Naive thymus-derived CD4-positive, alpha-beta T cell (primary cell): ENCODE measurements at regions of chr19 and their contacts with region 1.

Region 1: GRCh38 chr19:7522072-7522922 is at the start of gene MCOLN1:
- DNase-seq: peak; percentile 97 to 100 (median 99)
- ATAC-seq: peak; percentile 98
- H3K4me3 ChIP-seq: peak within 1 kb of the TSS; percentile 46
- H3K4me3 Mint-ChIP-seq: peak within 1 kb of the TSS; percentile 80 to 95 (median 88)
- H3K27ac ChIP-seq: peak within 1 kb of the TSS; percentile 30
- H3K27ac Mint-ChIP-seq: peak within 1 kb of the TSS; percentile 10 to 95 (median 90)
- H3K4me1 ChIP-seq: peaks cover 10 to 14% of the 10 kb centered on the region in 2 donors
- H3K4me1 Mint-ChIP-seq: peaks cover 14 to 23% (median 17%) of the 10 kb centered on the region in 7 donors
- H3K27me3 ChIP-seq: no peaks in the 10 kb centered on the region
- H3K27me3 Mint-ChIP-seq: peaks cover 0 to 14% (median 0%) of the 10 kb centered on the region in 5 donors
- total RNA-seq, gene MCOLN1: 13.8 to 49.2 (median 18.1) TPM

Region 2: DNA sequence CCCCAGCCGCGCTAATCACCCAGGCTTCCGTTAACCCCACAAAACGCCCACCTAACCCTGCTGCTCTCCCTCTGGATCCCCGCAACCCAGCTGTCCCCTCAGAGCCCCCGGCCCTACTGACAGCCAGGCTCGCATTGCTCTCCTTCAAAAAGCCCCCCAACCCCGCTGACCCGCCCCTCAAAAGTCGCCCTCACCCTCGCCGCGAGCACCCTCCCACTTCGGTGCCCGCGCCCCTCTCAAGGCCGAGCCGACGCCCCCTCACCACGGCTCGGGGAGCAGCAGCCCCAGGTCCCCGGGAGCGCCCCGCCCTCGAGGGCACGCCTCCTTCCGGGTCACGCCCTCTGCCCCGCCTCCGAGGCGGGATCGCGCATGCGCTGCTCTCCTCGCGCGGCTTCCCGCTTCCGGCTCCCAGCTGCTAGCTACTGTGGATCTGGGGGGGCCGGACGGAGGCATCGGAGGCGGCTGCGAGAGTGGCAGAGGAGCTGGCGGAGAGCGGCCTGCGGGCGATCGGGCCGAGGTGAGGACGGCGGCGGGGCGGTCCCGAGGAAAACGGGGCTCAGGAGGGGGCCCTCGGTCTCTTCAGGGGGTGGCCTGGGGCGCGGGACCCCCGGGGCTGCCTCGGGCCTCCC is 127.5 kb before region 1 on chr19:
- CTCF ChIA-PET with region 1: no interaction called
- POLR2A ChIA-PET with region 1: interaction called, 3 read pairs
- intact Hi-C with region 1: loop called in 1 of 2 experiments (anchors 1 kb)
- DNase-seq: peak; percentile 85 to 99 (median 91)
- ATAC-seq: peak; percentile 94
- H3K4me3 ChIP-seq: peak overlapping the region; percentile 46
- H3K4me3 Mint-ChIP-seq: peak overlapping the region; percentile 67 to 91 (median 84)
- H3K27ac ChIP-seq: peak overlapping the region; percentile 69
- H3K27ac Mint-ChIP-seq: peak overlapping the region; percentile 50 to 85 (median 80)
- H3K4me1 ChIP-seq: peaks cover 5 to 32% of the 10 kb centered on the region in 2 donors
- H3K4me1 Mint-ChIP-seq: peaks cover 15 to 64% (median 50%) of the 10 kb centered on the region in 7 donors
- H3K27me3 ChIP-seq: no peaks in the 10 kb centered on the region
- H3K27me3 Mint-ChIP-seq: no peaks in the 10 kb centered on the region

Region 3: DNA sequence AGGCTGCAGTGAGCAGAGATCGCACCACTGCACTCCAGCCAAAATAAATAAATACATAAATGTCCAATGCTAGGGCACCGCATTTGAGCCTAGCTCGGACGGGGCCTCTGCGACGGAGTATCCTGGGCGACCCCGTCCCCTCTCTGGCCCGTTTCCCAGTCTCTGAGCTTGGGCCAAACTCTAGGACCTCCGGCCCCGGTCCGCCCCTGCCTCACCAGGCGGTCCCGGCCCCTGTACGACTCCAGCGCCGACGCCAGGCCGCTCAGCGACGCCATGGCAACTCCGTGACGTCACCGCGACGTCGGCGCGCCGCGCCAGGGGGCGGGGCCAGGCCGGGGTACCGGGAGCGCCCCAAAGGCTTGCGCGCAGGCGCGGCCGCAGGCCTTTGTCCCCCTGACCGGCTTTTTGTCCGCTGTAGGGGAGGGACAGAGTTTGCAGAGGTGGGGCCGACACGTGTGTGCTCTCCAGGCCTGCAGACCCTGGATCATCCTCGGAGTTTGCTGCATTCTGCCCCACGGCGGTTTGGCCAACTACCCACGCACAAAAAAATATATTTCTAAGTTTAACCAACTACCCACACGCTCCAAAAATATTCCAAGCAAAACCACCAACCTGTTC is 33.5 kb before region 1 on chr19 and contains the start of gene PEX11G:
- CTCF ChIA-PET with region 1: no interaction called
- POLR2A ChIA-PET with region 1: interaction called, 7 read pairs
- intact Hi-C with region 1: loop called in 1 of 2 experiments (anchors 1 kb)
- DNase-seq: peak; percentile 79 to 95 (median 90)
- ATAC-seq: peak; percentile 92
- H3K4me3 ChIP-seq: peak within 1 kb of the TSS; percentile 75
- H3K4me3 Mint-ChIP-seq: peak within 1 kb of the TSS; percentile 84 to 96 (median 90)
- H3K27ac ChIP-seq: peak within 1 kb of the TSS; percentile 84
- H3K27ac Mint-ChIP-seq: peak within 1 kb of the TSS; percentile 74 to 98 (median 94)
- H3K4me1 ChIP-seq: peaks cover 6 to 9% of the 10 kb centered on the region in 2 donors
- H3K4me1 Mint-ChIP-seq: peaks cover 3 to 28% (median 13%) of the 10 kb centered on the region in 7 donors
- H3K27me3 ChIP-seq: no peaks in the 10 kb centered on the region
- H3K27me3 Mint-ChIP-seq: no peaks in the 10 kb centered on the region
- total RNA-seq, gene PEX11G: 0.59 to 1.2 (median 0.76) TPM

Region 4: GRCh38 chr19:7618771-7619514 is 96.6 kb after region 1 on chr19:
- CTCF ChIA-PET with region 1: no interaction called
- POLR2A ChIA-PET with region 1: no interaction called
- intact Hi-C with region 1: no loop called
- DNase-seq: no peak
- ATAC-seq: no peak
- H3K4me3 ChIP-seq: no peak overlapping the region
- H3K4me3 Mint-ChIP-seq: no peak overlapping the region
- H3K27ac ChIP-seq: no peak overlapping the region
- H3K27ac Mint-ChIP-seq: no peak overlapping the region
- H3K4me1 ChIP-seq: no peaks in the 10 kb centered on the region
- H3K4me1 Mint-ChIP-seq: peaks cover 0 to 8% (median 0%) of the 10 kb centered on the region in 7 donors
- H3K27me3 ChIP-seq: no peaks in the 10 kb centered on the region
- H3K27me3 Mint-ChIP-seq: no peaks in the 10 kb centered on the region